CD8-positive, alpha-beta T cell (primary cell): ENCODE measurements at regions of chr11 and their contacts with region 1.

Region 1: GRCh38 chr11:2400069-2400760 is at the start of gene TSSC4:
- DNase-seq: peak; percentile 99 to 100 (median 99)
- ATAC-seq: peak; percentile 87
- H3K4me3 ChIP-seq: peak within 1 kb of the TSS; percentile 94 to 96
- H3K4me3 Mint-ChIP-seq: peak within 1 kb of the TSS; percentile 92
- H3K27ac ChIP-seq: peak within 1 kb of the TSS; percentile 96 to 99
- H3K27ac Mint-ChIP-seq: peak within 1 kb of the TSS; percentile 94
- H3K4me1 ChIP-seq: peaks cover 24% of the 10 kb centered on the region
- H3K4me1 Mint-ChIP-seq: peaks cover 19% of the 10 kb centered on the region
- H3K27me3 ChIP-seq: no peaks in the 10 kb centered on the region
- H3K27me3 Mint-ChIP-seq: no peaks in the 10 kb centered on the region
- CTCF ChIP-seq: peak; percentile 85
- total RNA-seq, gene TSSC4: 48.8 to 49.5 TPM

Region 2: DNA sequence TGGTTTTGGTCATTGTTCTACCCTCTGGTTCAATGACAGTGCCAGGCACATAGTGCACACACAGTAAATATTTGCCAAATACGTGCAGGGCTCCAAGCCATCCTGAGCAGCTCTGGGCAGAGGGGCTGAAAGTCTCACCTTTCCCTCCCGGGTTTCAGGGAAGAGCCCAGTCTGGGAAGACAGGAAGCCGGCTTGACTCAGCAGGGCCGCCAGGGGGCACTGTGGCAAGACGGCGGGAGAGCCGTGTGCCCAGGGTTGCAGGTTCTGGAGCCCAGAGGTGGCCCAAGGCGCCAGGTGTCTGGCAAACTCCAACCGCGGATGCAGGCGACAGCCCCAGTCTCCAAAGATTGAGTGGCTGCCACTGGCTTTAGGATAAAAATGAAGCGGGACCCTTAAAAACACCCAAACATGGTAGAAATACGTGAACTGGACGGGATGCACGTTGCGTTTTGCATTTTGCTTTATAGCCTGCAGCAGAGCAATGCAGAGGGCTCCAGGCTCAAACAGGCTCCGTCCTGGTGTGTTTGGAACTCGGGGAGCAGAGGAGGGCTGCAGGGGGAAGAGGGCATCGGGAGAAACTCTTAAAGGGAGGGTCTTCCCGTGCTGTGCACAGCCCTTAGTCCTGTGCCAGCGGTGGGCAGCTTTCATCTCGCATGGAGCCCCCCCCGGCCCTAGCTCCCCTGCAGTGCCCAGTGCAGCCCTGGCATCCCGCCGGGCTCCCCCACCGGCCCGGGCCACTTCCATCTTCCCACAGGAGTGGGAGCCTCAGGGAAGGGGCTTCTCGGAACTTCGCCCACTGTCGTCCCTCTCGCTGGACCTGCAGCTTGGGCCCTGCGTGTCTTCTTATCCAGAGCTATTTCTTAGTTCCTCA is 759.9 kb before region 1 on chr11:
- CTCF ChIA-PET with region 1: no interaction called
- POLR2A ChIA-PET with region 1: no interaction called
- intact Hi-C with region 1: no loop called
- DNase-seq: peak in 6 of 9 experiments; percentile 9 to 59 (median 32)
- ATAC-seq: no peak
- H3K4me3 ChIP-seq: no peak overlapping the region
- H3K4me3 Mint-ChIP-seq: no peak overlapping the region
- H3K27ac ChIP-seq: no peak overlapping the region
- H3K27ac Mint-ChIP-seq: no peak overlapping the region
- H3K4me1 ChIP-seq: no peaks in the 10 kb centered on the region
- H3K4me1 Mint-ChIP-seq: no peaks in the 10 kb centered on the region
- H3K27me3 ChIP-seq: peaks cover 0 to 2% of the 10 kb centered on the region in 2 experiments
- H3K27me3 Mint-ChIP-seq: peaks cover 24% of the 10 kb centered on the region
- CTCF ChIP-seq: peak; percentile 77

Region 3: DNA sequence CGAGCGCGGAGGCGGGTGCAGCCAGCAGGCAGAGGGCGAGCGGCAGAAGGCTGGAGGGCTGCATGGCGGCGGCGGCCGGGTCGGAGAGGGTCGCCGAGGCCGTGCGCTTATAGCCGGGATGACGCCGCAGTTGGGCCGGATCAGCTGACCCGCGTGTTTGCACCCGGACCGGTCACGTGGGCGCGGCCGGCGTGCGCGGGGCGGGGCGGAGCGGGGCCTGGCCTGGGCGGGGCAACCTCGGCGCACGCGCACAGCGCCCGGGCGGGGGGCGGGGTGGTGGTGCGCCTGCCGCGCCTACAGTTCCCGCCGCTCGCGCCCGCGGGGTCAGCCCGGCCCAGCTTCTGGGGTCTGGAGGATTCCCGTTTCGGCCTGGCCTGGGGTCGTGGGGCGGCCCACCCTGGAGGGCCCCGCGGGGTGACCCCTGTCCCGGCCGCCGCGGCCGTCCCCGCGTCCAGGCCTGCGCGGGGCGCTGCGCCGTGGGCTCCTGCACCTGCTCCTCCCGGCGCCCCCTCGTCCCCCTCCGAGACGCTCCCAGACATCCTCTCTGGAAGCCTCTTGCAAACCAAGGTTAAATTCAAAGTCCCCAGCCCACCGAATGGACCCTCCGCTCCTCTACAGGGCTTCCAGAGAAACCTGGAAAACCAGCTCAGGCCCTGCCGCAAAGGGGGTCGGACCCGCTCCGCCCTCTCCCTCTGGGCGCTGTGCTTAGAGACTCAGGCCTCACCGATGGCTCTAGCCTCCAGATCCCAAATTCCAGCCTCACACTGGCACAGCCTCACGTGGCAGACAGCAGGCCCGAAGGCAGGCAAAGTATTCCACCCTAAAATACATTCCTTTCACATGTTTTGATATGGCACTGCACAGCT is 636.2 kb before region 1 on chr11 and contains the start of gene CTSD:
- CTCF ChIA-PET with region 1: no interaction called
- POLR2A ChIA-PET with region 1: no interaction called
- intact Hi-C with region 1: loop called in 1 of 2 experiments (anchors 5 kb)
- DNase-seq: peak; percentile 69 to 95 (median 88)
- ATAC-seq: peak; percentile 87
- H3K4me3 ChIP-seq: peak within 1 kb of the TSS; percentile 66 to 85
- H3K4me3 Mint-ChIP-seq: peak within 1 kb of the TSS; percentile 87
- H3K27ac ChIP-seq: peak within 1 kb of the TSS; percentile 45 to 62
- H3K27ac Mint-ChIP-seq: peak within 1 kb of the TSS; percentile 86
- H3K4me1 ChIP-seq: peaks cover 49% of the 10 kb centered on the region
- H3K4me1 Mint-ChIP-seq: peaks cover 35% of the 10 kb centered on the region
- H3K27me3 ChIP-seq: no peaks in the 10 kb centered on the region
- H3K27me3 Mint-ChIP-seq: no peaks in the 10 kb centered on the region
- CTCF ChIP-seq: no peak
- total RNA-seq, gene CTSD: 54.3 to 57.9 TPM

Region 4: GRCh38 chr11:2186669-2187279 is 213.4 kb before region 1 on chr11:
- CTCF ChIA-PET with region 1: no interaction called
- POLR2A ChIA-PET with region 1: no interaction called
- intact Hi-C with region 1: no loop called
- DNase-seq: peak; percentile 32 to 78 (median 52)
- ATAC-seq: peak; percentile 97
- H3K4me3 ChIP-seq: no peak overlapping the region
- H3K4me3 Mint-ChIP-seq: no peak overlapping the region
- H3K27ac ChIP-seq: no peak overlapping the region
- H3K27ac Mint-ChIP-seq: no peak overlapping the region
- H3K4me1 ChIP-seq: peaks cover 5% of the 10 kb centered on the region
- H3K4me1 Mint-ChIP-seq: peaks cover 5% of the 10 kb centered on the region
- H3K27me3 ChIP-seq: peaks cover 0 to 10% of the 10 kb centered on the region in 2 experiments
- H3K27me3 Mint-ChIP-seq: peaks cover 14% of the 10 kb centered on the region
- CTCF ChIP-seq: peak; percentile 67

Region 5: GRCh38 chr11:2298795-2299761 is 101.1 kb before region 1 on chr11:
- CTCF ChIA-PET with region 1: interaction called, 13 read pairs
- POLR2A ChIA-PET with region 1: interaction called, 23 read pairs
- intact Hi-C with region 1: no loop called
- DNase-seq: peak in 6 of 9 experiments; percentile 45 to 75 (median 66)
- ATAC-seq: peak; percentile 51
- H3K4me3 ChIP-seq: peak overlapping the region; percentile 43 to 85
- H3K4me3 Mint-ChIP-seq: peak overlapping the region; percentile 90
- H3K27ac ChIP-seq: peak overlapping the region; percentile 80 to 81
- H3K27ac Mint-ChIP-seq: peak overlapping the region; percentile 92
- H3K4me1 ChIP-seq: peaks cover 47% of the 10 kb centered on the region
- H3K4me1 Mint-ChIP-seq: peaks cover 64% of the 10 kb centered on the region
- H3K27me3 ChIP-seq: no peaks in the 10 kb centered on the region
- H3K27me3 Mint-ChIP-seq: no peaks in the 10 kb centered on the region
- CTCF ChIP-seq: no peak

Region 6: GRCh38 chr11:2377511-2378443 is 22.4 kb before region 1 on chr11:
- CTCF ChIA-PET with region 1: interaction called, 11 read pairs
- POLR2A ChIA-PET with region 1: interaction called, 8 read pairs
- intact Hi-C with region 1: loop called (anchors 1 kb)
- DNase-seq: peak in 8 of 9 experiments; percentile 31 to 77 (median 62)
- ATAC-seq: peak; percentile 59
- H3K4me3 ChIP-seq: peak overlapping the region; percentile 66 to 91
- H3K4me3 Mint-ChIP-seq: peak overlapping the region; percentile 83
- H3K27ac ChIP-seq: peak overlapping the region; percentile 63 to 68
- H3K27ac Mint-ChIP-seq: peak overlapping the region; percentile 79
- H3K4me1 ChIP-seq: peaks cover 36% of the 10 kb centered on the region
- H3K4me1 Mint-ChIP-seq: peaks cover 38% of the 10 kb centered on the region
- H3K27me3 ChIP-seq: no peaks in the 10 kb centered on the region
- H3K27me3 Mint-ChIP-seq: no peaks in the 10 kb centered on the region
- CTCF ChIP-seq: no peak

Region 7: GRCh38 chr11:2420502-2421225 is 20.4 kb after region 1 on chr11:
- CTCF ChIA-PET with region 1: interaction called, 42 read pairs
- POLR2A ChIA-PET with region 1: interaction called, 5 read pairs
- intact Hi-C with region 1: loop called in 1 of 2 experiments (anchors 2 kb)
- DNase-seq: peak; percentile 52 to 86 (median 69)
- ATAC-seq: peak; percentile 94
- H3K4me3 ChIP-seq: no peak overlapping the region
- H3K4me3 Mint-ChIP-seq: no peak overlapping the region
- H3K27ac ChIP-seq: no peak overlapping the region
- H3K27ac Mint-ChIP-seq: no peak overlapping the region
- H3K4me1 ChIP-seq: peaks cover 14% of the 10 kb centered on the region
- H3K4me1 Mint-ChIP-seq: peaks cover 4% of the 10 kb centered on the region
- H3K27me3 ChIP-seq: peaks cover 0 to 3% of the 10 kb centered on the region in 2 experiments
- H3K27me3 Mint-ChIP-seq: no peaks in the 10 kb centered on the region
- CTCF ChIP-seq: peak; percentile 83

Region 8: GRCh38 chr11:2452321-2453012 is 52.3 kb after region 1 on chr11:
- CTCF ChIA-PET with region 1: no interaction called
- POLR2A ChIA-PET with region 1: no interaction called
- intact Hi-C with region 1: no loop called
- DNase-seq: no peak
- ATAC-seq: no peak
- H3K4me3 ChIP-seq: no peak overlapping the region
- H3K4me3 Mint-ChIP-seq: no peak overlapping the region
- H3K27ac ChIP-seq: no peak overlapping the region
- H3K27ac Mint-ChIP-seq: no peak overlapping the region
- H3K4me1 ChIP-seq: peaks cover 10% of the 10 kb centered on the region
- H3K4me1 Mint-ChIP-seq: peaks cover 7% of the 10 kb centered on the region
- H3K27me3 ChIP-seq: peaks cover 0 to 16% of the 10 kb centered on the region in 2 experiments
- H3K27me3 Mint-ChIP-seq: no peaks in the 10 kb centered on the region
- CTCF ChIP-seq: no peak

Region 9: GRCh38 chr11:2507212-2507901 is 107.1 kb after region 1 on chr11:
- CTCF ChIA-PET with region 1: no interaction called
- POLR2A ChIA-PET with region 1: no interaction called
- intact Hi-C with region 1: no loop called
- DNase-seq: peak in 1 of 9 experiments; percentile 38
- ATAC-seq: no peak
- H3K4me3 ChIP-seq: no peak overlapping the region
- H3K4me3 Mint-ChIP-seq: no peak overlapping the region
- H3K27ac ChIP-seq: no peak overlapping the region
- H3K27ac Mint-ChIP-seq: no peak overlapping the region
- H3K4me1 ChIP-seq: no peaks in the 10 kb centered on the region
- H3K4me1 Mint-ChIP-seq: peaks cover 9% of the 10 kb centered on the region
- H3K27me3 ChIP-seq: no peaks in the 10 kb centered on the region
- H3K27me3 Mint-ChIP-seq: no peaks in the 10 kb centered on the region
- CTCF ChIP-seq: no peak

Region 10: GRCh38 chr11:3014057-3014938 is 614.1 kb after region 1 on chr11:
- CTCF ChIA-PET with region 1: no interaction called
- POLR2A ChIA-PET with region 1: no interaction called
- intact Hi-C with region 1: loop called in 1 of 2 experiments (anchors 5 kb)
- DNase-seq: peak; percentile 61 to 94 (median 85)
- ATAC-seq: peak; percentile 84
- H3K4me3 ChIP-seq: peak overlapping the region; percentile 17 to 27
- H3K4me3 Mint-ChIP-seq: peak overlapping the region; percentile 57
- H3K27ac ChIP-seq: peak overlapping the region; percentile 46 to 62
- H3K27ac Mint-ChIP-seq: peak overlapping the region; percentile 92
- H3K4me1 ChIP-seq: peaks cover 86% of the 10 kb centered on the region
- H3K4me1 Mint-ChIP-seq: peaks cover 74% of the 10 kb centered on the region
- H3K27me3 ChIP-seq: no peaks in the 10 kb centered on the region
- H3K27me3 Mint-ChIP-seq: no peaks in the 10 kb centered on the region
- CTCF ChIP-seq: no peak

Region 11: DNA sequence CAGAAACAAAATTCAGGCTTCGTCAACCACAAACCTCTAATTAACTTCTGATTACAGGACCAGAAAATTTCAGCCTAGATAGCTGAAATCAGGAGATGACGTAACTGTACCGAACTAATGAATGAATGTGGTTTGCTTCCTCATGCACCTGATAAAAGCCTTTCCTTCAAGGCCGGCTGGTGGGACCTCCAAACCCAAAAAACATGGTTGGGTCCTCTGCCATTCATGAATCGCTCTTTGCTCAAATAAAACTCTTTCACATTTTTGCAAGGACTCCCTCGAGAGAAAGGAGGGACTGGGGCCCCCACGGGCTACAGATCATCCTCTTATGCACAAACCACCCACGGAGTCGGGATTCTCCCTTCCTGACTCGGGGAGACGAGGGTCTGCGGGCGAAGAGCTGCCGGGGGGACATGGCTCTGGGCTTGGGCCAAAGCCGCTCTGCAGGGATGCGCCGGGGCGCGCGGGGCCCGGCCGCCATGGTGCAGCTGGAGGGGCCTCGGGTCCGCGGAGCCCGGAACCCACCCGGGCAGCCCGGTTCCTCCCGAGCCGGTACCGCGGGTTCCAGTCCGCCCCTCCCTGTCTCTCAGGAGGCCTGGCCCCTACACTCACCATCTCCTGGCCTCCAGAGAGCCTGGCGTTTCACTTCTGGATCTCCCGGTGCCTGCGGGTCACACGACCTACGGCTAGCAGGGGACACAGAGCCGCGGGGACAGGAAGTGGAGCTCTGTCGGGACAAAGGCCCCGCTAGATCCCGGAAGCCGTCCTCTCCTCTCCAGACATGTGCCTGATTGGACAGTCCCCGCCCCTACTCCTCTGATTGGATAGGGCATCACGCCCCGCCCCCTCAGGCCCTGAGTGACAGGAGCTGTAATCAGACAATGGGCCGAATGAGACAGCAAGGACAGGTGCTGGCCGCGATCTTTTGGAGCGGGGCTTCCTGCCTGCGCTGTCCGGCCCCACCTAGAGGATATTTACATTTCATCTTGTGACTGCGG is 978.5 kb after region 1 on chr11 and contains the start of gene ZNF195:
- CTCF ChIA-PET with region 1: no interaction called
- POLR2A ChIA-PET with region 1: no interaction called
- intact Hi-C with region 1: loop called in 1 of 2 experiments (anchors 5 kb)
- DNase-seq: peak; percentile 92 to 98 (median 97)
- ATAC-seq: peak; percentile 99
- H3K4me3 ChIP-seq: peak within 1 kb of the TSS; percentile 84 to 97
- H3K4me3 Mint-ChIP-seq: peak within 1 kb of the TSS; percentile 96
- H3K27ac ChIP-seq: peak within 1 kb of the TSS; percentile 80 to 91
- H3K27ac Mint-ChIP-seq: peak within 1 kb of the TSS; percentile 95
- H3K4me1 ChIP-seq: peaks cover 27% of the 10 kb centered on the region
- H3K4me1 Mint-ChIP-seq: peaks cover 58% of the 10 kb centered on the region
- H3K27me3 ChIP-seq: no peaks in the 10 kb centered on the region
- H3K27me3 Mint-ChIP-seq: no peaks in the 10 kb centered on the region
- CTCF ChIP-seq: no peak
- total RNA-seq, gene ZNF195: 25.5 to 29.1 TPM